B cell (primary cell): ENCODE measurements at regions of chr6 and their contacts with region 1.

Region 1: GRCh38 chr6:181049-181654 is 111.1 kb upstream of the DUSP22 start:
- DNase-seq: peak; percentile 51
- ATAC-seq: peak; percentile 44
- H3K4me3 ChIP-seq: peak overlapping the region in 2 of 5 experiments; percentile 18 to 35
- H3K4me3 Mint-ChIP-seq: peak overlapping the region; percentile 83
- H3K27ac ChIP-seq: peak overlapping the region in 1 of 2 donors; percentile 7
- H3K27ac Mint-ChIP-seq: peak overlapping the region; percentile 81
- H3K4me1 ChIP-seq: peaks cover 59 to 60% of the 10 kb centered on the region in 2 donors
- H3K4me1 Mint-ChIP-seq: peaks cover 61% of the 10 kb centered on the region
- H3K27me3 ChIP-seq: no peaks in the 10 kb centered on the region
- H3K27me3 Mint-ChIP-seq: no peaks in the 10 kb centered on the region
- CTCF ChIP-seq: no peak

Region 2: DNA sequence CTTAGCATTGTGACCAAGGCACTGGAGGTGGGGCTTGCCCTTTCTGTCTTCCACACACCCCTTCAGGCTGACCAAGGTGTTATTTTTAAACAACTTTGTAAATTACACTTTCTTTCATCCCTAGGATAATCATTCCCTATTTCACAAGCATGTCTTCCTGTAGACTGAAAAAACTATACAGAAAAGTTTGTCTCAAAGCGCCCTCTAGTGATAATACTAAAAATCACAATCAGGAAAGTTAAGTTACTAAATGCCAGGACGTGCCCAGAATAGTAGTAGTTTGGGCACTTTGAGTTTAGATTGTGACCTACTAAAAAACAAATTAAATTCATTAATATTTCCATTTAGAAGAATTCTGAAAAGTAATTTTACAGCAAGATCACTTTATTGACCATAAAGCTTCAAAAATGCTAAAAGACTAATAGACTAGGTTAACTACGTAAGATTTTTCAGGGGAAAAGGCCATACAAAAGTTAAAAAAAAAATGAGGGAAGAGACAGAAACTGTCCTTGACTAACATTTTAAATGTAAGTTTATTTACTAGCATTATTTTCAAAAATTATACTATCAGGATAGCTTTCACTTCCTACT is 12.2 kb before region 1 on chr6:
- CTCF ChIA-PET with region 1: interaction called, 29 read pairs
- POLR2A ChIA-PET with region 1: no interaction called
- intact Hi-C with region 1: no loop called
- DNase-seq: peak; percentile 56
- ATAC-seq: no peak
- H3K4me3 ChIP-seq: no peak overlapping the region
- H3K4me3 Mint-ChIP-seq: no peak overlapping the region
- H3K27ac ChIP-seq: no peak overlapping the region
- H3K27ac Mint-ChIP-seq: no peak overlapping the region
- H3K4me1 ChIP-seq: no peaks in the 10 kb centered on the region
- H3K4me1 Mint-ChIP-seq: no peaks in the 10 kb centered on the region
- H3K27me3 ChIP-seq: no peaks in the 10 kb centered on the region
- H3K27me3 Mint-ChIP-seq: no peaks in the 10 kb centered on the region
- CTCF ChIP-seq: peak; percentile 84

Region 3: GRCh38 chr6:347232-347631 is 166.1 kb after region 1 on chr6:
- CTCF ChIA-PET with region 1: no interaction called
- POLR2A ChIA-PET with region 1: no interaction called
- intact Hi-C with region 1: no loop called
- DNase-seq: peak; percentile 87
- ATAC-seq: peak; percentile 94
- H3K4me3 ChIP-seq: no peak overlapping the region
- H3K4me3 Mint-ChIP-seq: peak overlapping the region; percentile 66
- H3K27ac ChIP-seq: peak overlapping the region; percentile 54 to 60
- H3K27ac Mint-ChIP-seq: peak overlapping the region; percentile 86
- H3K4me1 ChIP-seq: peaks cover 31 to 75% of the 10 kb centered on the region in 2 donors
- H3K4me1 Mint-ChIP-seq: peaks cover 60% of the 10 kb centered on the region
- H3K27me3 ChIP-seq: no peaks in the 10 kb centered on the region
- H3K27me3 Mint-ChIP-seq: no peaks in the 10 kb centered on the region
- CTCF ChIP-seq: no peak